ENCODE measurements at regions of chr7 and their contacts with region 1.

Region 1: DNA sequence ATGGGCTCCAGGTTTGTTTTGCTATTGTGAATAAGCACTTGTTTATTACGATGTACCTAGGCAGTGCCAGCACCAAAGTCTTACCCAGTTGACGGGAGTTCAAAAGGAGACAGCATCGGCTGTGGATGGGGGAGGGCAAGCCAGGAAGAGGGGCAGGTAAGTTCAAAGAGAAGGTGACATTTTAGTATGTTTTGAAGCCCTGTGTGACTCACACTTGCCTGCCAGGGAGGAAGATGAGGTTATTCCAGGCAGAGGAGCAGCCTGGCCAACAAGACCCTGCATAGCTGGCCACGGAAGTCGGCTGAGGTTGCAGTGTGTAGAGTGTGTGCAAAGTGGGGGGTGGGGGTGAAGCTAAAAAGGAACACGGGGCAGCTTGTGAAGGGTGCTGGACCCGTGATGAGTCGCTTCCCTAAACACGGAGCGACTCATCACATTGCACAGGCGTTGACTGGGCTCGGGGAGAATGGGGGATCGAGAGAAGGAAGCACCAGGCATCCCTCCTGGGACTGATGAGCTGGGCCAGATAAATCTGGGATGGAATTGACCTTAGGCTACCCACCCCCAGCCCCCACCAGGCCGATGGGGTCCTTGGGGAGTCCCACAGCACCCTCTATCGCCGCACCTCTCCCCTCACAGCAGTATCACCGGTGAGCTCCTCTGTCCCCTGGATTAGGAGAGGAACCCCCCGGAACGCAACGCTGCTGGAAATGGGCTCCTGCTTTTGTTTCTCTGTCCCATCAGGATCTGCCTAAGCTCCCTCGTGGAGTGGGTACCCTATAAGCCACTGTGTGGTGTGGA is 97.9 kb upstream of the IKZF1 start:
- DNase-seq: peak; percentile 89
- ATAC-seq: peak; percentile 67
- H3K4me3 Mint-ChIP-seq: peak overlapping the region; percentile 65
- H3K27ac Mint-ChIP-seq: peak overlapping the region; percentile 87
- H3K4me1 Mint-ChIP-seq: peaks cover 93% of the 10 kb centered on the region
- H3K27me3 Mint-ChIP-seq: no peaks in the 10 kb centered on the region

Region 2: DNA sequence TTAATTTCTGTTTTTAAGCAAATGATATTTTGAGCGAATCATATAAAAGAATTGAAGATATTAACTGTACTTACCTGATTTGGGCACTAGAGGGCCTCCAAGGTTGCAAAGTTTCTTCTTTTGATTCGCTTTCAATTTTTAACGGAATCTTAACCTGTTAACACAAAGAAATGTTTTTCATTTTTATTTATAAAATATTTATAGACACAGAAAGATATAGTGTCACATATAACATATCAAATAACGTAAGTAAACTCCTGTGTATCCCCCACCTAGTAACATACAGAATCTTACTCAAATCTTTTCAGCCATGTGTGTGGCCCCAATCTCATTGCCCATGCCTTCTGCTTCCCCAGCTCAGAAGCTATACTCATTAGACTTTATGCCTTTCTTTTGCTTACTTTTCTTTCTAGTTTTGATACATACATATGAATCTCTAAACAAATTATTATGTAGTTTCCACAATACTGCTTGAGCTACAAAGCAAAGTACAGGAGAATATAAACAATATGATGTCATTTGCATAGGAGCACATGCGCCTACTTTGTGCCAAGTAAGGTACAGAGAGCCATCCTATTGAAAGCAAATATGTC is 64.1 kb before region 1 on chr7:
- CTCF ChIA-PET with region 1: interaction called, 27 read pairs
- DNase-seq: no peak
- ATAC-seq: peak; percentile 67
- H3K4me3 Mint-ChIP-seq: peak overlapping the region; percentile 50
- H3K27ac Mint-ChIP-seq: peak overlapping the region; percentile 81
- H3K4me1 Mint-ChIP-seq: peaks cover 28% of the 10 kb centered on the region
- H3K27me3 Mint-ChIP-seq: peaks cover 16% of the 10 kb centered on the region

Region 3: DNA sequence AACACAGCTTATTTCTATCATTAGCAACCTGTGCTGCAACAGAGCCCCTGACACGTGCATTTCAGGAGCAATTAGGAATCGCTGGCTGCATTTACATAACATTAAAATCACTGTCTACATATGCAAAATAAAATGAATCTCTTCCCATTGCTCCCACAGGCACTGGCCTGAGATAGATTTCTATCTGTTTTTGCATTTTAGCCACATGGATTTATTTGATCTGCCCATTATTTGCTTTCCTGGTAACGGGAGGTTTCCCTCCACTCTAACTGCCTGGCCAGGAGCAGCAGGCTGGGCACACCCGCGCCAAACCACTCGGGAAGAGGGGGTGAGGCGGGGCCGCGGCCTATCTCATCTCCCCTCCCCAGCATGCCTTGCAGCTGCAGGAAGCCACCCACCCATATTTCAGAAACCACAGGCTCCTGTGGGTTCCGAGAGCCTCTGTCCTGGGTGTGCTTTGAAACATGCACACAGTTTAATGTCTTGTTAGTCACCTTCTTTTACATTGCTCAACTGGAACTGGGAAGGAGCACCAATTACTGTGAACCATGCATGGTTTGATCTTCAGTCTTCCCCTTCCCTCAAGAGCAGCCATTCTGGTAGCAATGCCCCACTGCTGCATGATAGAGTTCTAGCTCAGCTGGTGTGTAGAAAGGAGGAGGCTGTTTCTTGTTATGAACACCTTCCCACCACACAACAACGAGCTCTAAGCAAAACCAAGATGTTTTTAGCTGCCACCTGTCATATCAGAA is 60.2 kb after region 1 on chr7:
- CTCF ChIA-PET with region 1: interaction called, 135 read pairs
- DNase-seq: peak; percentile 93
- ATAC-seq: peak; percentile 59
- H3K4me3 Mint-ChIP-seq: peak overlapping the region; percentile 65
- H3K27ac Mint-ChIP-seq: peak overlapping the region; percentile 98
- H3K4me1 Mint-ChIP-seq: peaks cover 93% of the 10 kb centered on the region
- H3K27me3 Mint-ChIP-seq: no peaks in the 10 kb centered on the region

Region 4: DNA sequence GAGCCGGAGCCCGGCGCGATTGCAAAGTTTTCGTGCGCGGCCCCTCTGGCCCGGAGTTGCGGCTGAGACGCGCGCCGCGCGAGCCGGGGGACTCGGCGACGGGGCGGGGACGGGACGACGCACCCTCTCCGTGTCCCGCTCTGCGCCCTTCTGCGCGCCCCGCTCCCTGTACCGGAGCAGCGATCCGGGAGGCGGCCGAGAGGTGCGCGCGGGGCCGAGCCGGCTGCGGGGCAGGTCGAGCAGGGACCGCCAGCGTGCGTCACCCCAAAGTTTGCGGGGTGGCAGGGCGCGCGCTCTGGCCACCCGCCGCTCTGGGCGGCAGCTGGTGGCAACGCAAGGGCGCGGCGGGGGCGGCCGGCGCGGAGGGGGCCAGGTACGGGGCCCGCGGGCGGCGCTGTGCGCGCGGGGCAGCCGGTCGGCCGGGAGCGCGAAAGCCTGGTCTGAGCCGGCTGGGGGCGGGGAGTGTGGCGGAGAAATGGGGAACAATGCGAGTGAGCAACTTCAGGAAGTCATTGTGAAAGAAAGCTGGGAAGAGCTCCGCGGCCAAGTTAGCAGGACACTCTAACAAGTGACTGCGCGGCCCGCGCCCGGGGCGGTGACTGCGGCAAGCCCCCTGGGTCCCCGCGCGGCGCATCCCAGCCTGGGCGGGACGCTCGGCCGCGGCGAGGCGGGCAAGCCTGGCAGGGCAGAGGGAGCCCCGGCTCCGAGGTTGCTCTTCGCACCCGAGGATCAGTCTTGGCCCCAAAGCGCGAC is 97.7 kb after region 1 on chr7 and contains the start of gene IKZF1:
- CTCF ChIA-PET with region 1: interaction called, 197 read pairs
- DNase-seq: peak; percentile 71
- ATAC-seq: peak; percentile 40
- H3K4me3 Mint-ChIP-seq: peak within 1 kb of the TSS; percentile 91
- H3K27ac Mint-ChIP-seq: peak within 1 kb of the TSS; percentile 97
- H3K4me1 Mint-ChIP-seq: peaks cover 33% of the 10 kb centered on the region
- H3K27me3 Mint-ChIP-seq: no peaks in the 10 kb centered on the region
- total RNA-seq, gene IKZF1: 348 to 374 TPM

Region 5: GRCh38 chr7:50349963-50350944 is 143.6 kb after region 1 on chr7:
- CTCF ChIA-PET with region 1: interaction called, 22 read pairs
- DNase-seq: peak; percentile 92
- ATAC-seq: peak; percentile 75
- H3K4me3 Mint-ChIP-seq: peak overlapping the region; percentile 64
- H3K27ac Mint-ChIP-seq: peak overlapping the region; percentile 94
- H3K4me1 Mint-ChIP-seq: peaks cover 96% of the 10 kb centered on the region
- H3K27me3 Mint-ChIP-seq: no peaks in the 10 kb centered on the region

Region 6: GRCh38 chr7:50397320-50397970 is 190.8 kb after region 1 on chr7:
- CTCF ChIA-PET with region 1: interaction called, 11 read pairs
- DNase-seq: peak; percentile 73
- ATAC-seq: peak; percentile 10
- H3K4me3 Mint-ChIP-seq: no peak overlapping the region
- H3K27ac Mint-ChIP-seq: peak overlapping the region; percentile 82
- H3K4me1 Mint-ChIP-seq: peaks cover 74% of the 10 kb centered on the region
- H3K27me3 Mint-ChIP-seq: no peaks in the 10 kb centered on the region

Measured in activated CD8-positive, alpha-beta memory T cell treated with anti-CD3 and anti-CD28 coated beads, Interleukin-2, amount 10 ng/mL, durations not matched to agents 7 days and 5 days (primary cell).